A673 (cell line): ENCODE measurements at regions of chr12 and their contacts with region 1.

Region 1: GRCh38 chr12:49866859-49867579 is 24.1 kb upstream of the BCDIN3D start:
- DNase-seq: peak; percentile 73
- H3K4me3 ChIP-seq: no peak overlapping the region
- H3K27ac ChIP-seq: no peak overlapping the region
- H3K4me1 ChIP-seq: peaks cover 7% of the 10 kb centered on the region
- H3K27me3 ChIP-seq: no peaks in the 10 kb centered on the region
- CTCF ChIP-seq: peak; percentile 97

Region 2: GRCh38 chr12:49662998-49663843 is 203.8 kb before region 1 on chr12:
- CTCF ChIA-PET with region 1: no interaction called
- POLR2A ChIA-PET with region 1: no interaction called
- intact Hi-C with region 1: no loop called
- DNase-seq: peak; percentile 95
- H3K4me3 ChIP-seq: no peak overlapping the region
- H3K27ac ChIP-seq: peak overlapping the region; percentile 90
- H3K4me1 ChIP-seq: peaks cover 19% of the 10 kb centered on the region
- H3K27me3 ChIP-seq: no peaks in the 10 kb centered on the region
- CTCF ChIP-seq: no peak

Region 3: GRCh38 chr12:49945394-49946080 is 78.5 kb after region 1 on chr12:
- CTCF ChIA-PET with region 1: interaction called, 7 read pairs
- POLR2A ChIA-PET with region 1: no interaction called
- intact Hi-C with region 1: loop called (anchors 5 kb)
- DNase-seq: peak; percentile 82
- H3K4me3 ChIP-seq: peak overlapping the region; percentile 30
- H3K27ac ChIP-seq: no peak overlapping the region
- H3K4me1 ChIP-seq: no peaks in the 10 kb centered on the region
- H3K27me3 ChIP-seq: no peaks in the 10 kb centered on the region
- CTCF ChIP-seq: peak; percentile 97